ENCODE measurements at regions of chr3 and their contacts with region 1.

Region 1: GRCh38 chr3:64484289-64484992 is 203.4 kb downstream of the ADAMTS9 start:
- DNase-seq: peak; percentile 87
- ATAC-seq: peak; percentile 97
- H3K4me3 Mint-ChIP-seq: no peak overlapping the region
- H3K27ac Mint-ChIP-seq: no peak overlapping the region
- H3K4me1 Mint-ChIP-seq: no peaks in the 10 kb centered on the region
- H3K27me3 Mint-ChIP-seq: peaks cover 12% of the 10 kb centered on the region

Region 2: DNA sequence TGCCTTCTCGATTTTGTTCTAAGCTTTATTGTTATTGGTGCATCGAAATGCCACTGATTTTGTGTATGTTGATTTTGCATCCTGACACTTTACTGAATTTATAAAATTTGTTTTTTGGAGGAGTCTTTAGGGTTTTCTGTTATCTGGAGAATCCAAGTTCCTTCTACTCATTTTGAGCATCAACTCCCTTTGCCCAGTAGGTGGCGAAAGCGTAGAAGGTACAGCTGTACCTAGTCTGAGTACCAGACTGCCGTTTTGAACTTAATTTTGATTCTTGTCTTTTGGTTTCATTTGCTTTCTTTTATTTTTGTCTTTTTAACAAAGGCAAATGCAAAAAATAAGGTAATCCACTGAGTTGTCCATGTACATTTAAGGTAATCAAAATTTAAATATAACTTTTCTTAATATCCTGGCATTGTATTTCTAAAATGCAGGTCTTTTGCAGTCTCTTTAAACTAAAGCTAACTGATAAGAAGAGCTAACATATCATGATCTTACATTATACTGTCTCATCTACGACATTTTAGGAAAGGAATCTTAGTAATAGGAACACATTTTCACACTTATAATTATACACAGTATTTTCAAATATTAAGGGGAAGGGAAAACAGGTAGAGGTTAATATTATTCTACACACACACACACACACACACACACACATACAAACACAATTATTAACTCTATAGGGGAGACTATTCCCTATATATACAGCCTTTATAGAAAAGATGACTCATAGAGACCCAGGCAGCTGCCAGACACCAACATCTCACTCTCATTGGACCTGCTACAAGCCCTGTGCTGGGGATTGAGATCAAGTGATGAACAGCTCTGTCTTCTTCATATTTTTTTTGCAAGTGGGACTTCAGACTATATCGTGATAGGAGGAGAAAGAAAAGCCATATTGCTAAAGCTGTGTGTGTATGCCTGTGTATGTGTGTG is 1134.6 kb before region 1 on chr3:
- CTCF ChIA-PET with region 1: no interaction called
- POLR2A ChIA-PET with region 1: no interaction called
- intact Hi-C with region 1: loop called in 1 of 2 experiments (anchors 10 kb)
- DNase-seq: peak; percentile 66
- ATAC-seq: peak; percentile 70
- H3K4me3 Mint-ChIP-seq: no peak overlapping the region
- H3K27ac Mint-ChIP-seq: no peak overlapping the region
- H3K4me1 Mint-ChIP-seq: no peaks in the 10 kb centered on the region
- H3K27me3 Mint-ChIP-seq: peaks cover 26% of the 10 kb centered on the region

Region 3: DNA sequence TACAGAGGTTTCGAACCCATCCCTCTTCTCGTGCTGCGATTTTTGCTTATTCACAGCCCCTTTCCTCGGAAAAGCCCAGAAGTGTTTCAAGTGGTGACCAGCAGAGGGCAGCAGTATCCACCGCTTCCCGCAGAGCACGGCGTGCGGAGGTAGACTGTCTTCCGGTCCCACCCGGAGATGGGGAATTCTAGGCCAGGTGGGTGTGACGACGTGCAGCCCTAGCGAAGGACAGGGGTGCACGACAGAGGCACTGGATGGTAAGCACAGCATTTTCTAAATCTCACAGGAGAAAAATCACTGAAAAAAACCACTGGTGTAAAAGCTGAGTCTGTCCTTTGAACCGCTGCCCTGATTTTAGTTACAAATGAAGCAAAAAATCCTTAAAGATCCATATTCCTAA is 453.7 kb before region 1 on chr3:
- CTCF ChIA-PET with region 1: interaction called, 28 read pairs
- POLR2A ChIA-PET with region 1: no interaction called
- intact Hi-C with region 1: loop called (anchors 1 kb)
- DNase-seq: peak; percentile 88
- ATAC-seq: peak; percentile 97
- H3K4me3 Mint-ChIP-seq: peak overlapping the region; percentile 60
- H3K27ac Mint-ChIP-seq: peak overlapping the region; percentile 84
- H3K4me1 Mint-ChIP-seq: peaks cover 6% of the 10 kb centered on the region
- H3K27me3 Mint-ChIP-seq: peaks cover 18% of the 10 kb centered on the region

Region 4: DNA sequence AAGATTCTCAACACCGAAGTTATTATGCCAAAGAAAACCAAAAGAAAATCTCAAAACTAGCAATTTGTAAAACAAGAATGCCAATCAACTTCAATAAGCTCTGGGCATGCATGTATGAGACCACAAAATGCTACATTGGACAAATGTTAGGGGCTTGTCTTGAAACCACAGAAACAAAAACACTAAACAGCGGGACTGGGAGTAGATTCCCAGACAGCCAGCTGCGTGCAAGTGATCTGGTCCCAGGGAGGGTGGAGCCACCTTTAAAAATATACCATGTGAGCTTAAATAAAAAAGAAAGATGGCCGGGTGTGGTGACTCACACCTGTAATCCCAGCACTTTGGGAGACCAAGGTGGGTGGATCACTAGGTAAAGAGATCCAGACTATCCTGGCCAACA is 95.6 kb before region 1 on chr3:
- CTCF ChIA-PET with region 1: no interaction called
- POLR2A ChIA-PET with region 1: no interaction called
- intact Hi-C with region 1: no loop called
- DNase-seq: no peak
- ATAC-seq: no peak
- H3K4me3 Mint-ChIP-seq: no peak overlapping the region
- H3K27ac Mint-ChIP-seq: no peak overlapping the region
- H3K4me1 Mint-ChIP-seq: no peaks in the 10 kb centered on the region
- H3K27me3 Mint-ChIP-seq: peaks cover 6% of the 10 kb centered on the region

Region 5: GRCh38 chr3:64399205-64399800 is 85.1 kb before region 1 on chr3:
- CTCF ChIA-PET with region 1: interaction called, 3 read pairs
- POLR2A ChIA-PET with region 1: no interaction called
- intact Hi-C with region 1: loop called in 1 of 2 experiments (anchors 1 kb)
- DNase-seq: peak; percentile 18
- ATAC-seq: peak; percentile 42
- H3K4me3 Mint-ChIP-seq: no peak overlapping the region
- H3K27ac Mint-ChIP-seq: no peak overlapping the region
- H3K4me1 Mint-ChIP-seq: no peaks in the 10 kb centered on the region
- H3K27me3 Mint-ChIP-seq: no peaks in the 10 kb centered on the region

Region 6: DNA sequence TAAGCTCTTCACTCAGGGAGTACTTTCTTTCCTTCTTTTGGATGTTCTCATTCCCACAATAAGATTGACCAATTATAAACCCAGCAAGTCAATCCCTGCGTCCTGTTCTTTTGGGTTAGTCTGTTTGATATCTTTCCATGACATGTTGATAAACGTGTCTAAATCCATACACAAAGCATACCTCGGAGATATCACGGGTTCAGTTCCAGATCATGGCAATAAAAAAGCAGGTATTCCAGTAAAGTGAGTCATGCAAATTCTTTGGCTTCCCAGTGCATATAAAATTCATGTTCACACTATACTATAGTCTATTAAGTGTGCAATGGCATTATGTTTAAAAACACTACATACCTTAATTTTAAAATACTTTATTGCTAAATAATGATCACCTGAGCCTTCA is 886.6 kb after region 1 on chr3:
- CTCF ChIA-PET with region 1: no interaction called
- POLR2A ChIA-PET with region 1: no interaction called
- intact Hi-C with region 1: no loop called
- DNase-seq: no peak
- ATAC-seq: no peak
- H3K4me3 Mint-ChIP-seq: no peak overlapping the region
- H3K27ac Mint-ChIP-seq: no peak overlapping the region
- H3K4me1 Mint-ChIP-seq: no peaks in the 10 kb centered on the region
- H3K27me3 Mint-ChIP-seq: no peaks in the 10 kb centered on the region

Measured in activated CD4-positive, alpha-beta T cell treated with anti-CD3 and anti-CD28 coated beads for 36 hours (primary cell).